ENCODE measurements at regions of chr14 and their contacts with region 1.

Region 1: DNA sequence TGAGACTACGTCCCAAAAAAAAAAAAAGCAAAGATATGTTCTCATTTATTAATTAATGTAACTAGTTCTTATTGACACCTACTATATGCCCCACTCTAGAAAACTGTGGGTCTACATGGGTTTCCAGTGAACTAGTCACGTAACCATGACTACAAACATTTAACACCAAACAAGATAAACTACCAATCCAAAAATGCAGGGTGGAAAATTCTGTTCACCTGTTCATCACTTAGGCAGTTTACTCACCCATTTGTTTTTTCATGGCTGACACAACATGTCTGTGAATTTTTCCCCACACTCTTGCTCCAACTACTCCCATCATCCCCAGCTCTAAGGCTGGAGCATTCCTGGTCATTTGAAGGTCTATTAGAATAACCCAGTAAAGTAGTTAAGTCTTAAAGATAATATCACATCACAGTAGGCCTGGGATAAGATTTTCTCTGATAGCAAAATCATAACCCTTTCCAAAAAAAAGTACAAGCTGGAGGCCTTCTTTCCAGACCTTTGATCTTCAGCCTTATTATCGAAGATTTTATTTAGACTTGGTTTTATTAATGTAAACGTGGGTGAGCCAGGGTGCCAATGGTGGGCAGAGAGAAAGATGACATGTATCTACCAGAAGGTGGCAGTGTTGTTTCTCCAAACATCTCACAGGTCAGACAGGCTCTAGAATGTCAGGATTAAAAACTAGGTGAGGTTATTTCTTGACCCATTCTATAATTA is 61.6 kb upstream of the DAAM1 start:
- DNase-seq: peak; percentile 69
- H3K27ac ChIP-seq: no peak overlapping the region
- CTCF ChIP-seq: peak; percentile 80

Region 2: GRCh38 chr14:58501214-58501816 is 625.6 kb before region 1 on chr14:
- CTCF ChIA-PET with region 1: interaction called, 13 read pairs
- POLR2A ChIA-PET with region 1: no interaction called
- DNase-seq: peak; percentile 34
- H3K27ac ChIP-seq: no peak overlapping the region
- CTCF ChIP-seq: peak; percentile 93

Region 3: GRCh38 chr14:59107819-59108428 is 18.9 kb before region 1 on chr14:
- CTCF ChIA-PET with region 1: no interaction called
- POLR2A ChIA-PET with region 1: no interaction called
- DNase-seq: no peak
- H3K27ac ChIP-seq: no peak overlapping the region
- CTCF ChIP-seq: no peak

Region 4: DNA sequence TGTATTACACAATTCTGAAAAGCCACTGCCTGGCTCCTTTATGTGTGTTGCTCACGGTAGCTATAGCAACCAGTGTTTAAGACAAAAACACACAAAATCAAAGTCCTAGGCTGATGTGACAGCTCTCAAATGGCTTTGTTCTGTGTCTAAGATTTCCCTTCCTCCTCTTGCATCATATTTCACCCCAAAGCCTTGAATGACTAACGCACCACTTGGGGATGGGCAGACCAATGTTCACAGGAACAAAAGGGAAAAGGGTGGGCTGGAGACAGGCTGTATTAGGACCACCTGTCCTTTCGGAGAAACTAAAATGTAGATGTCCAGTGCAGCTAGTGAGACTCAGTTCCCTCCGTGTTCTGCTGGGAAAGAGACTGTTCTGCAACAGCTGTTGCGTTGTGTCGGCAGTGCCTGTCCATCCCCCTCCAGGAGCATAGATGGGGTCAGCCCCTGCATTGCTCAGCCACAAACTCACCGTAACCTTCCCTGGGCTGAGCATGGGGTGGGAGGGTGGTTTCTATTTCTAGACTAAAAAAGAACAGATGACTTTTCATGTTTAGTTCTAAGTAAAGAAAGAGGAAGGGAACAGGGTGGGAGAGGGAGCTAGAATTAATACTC is 34.8 kb after region 1 on chr14:
- CTCF ChIA-PET with region 1: no interaction called
- POLR2A ChIA-PET with region 1: no interaction called
- DNase-seq: peak; percentile 19
- H3K27ac ChIP-seq: no peak overlapping the region
- CTCF ChIP-seq: no peak

Region 5: DNA sequence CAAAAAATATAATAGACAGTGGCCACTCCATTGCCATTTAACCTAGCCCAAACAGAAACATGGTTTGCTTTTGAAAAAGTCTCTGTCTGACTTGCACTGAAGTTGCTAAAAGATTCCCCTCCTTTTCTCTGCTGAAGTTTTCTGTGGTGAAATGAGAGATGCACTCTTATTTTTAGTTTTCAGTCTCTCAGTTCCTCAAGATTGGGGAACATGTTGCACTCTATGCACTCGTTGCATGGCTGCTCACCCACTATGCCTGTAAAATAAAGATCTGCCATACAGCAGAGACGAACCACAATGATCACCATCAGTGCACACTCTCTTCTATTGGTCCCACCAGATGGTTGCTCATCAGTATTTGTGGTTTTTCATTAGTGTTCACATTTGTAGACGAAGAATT is 48.5 kb after region 1 on chr14:
- CTCF ChIA-PET with region 1: no interaction called
- POLR2A ChIA-PET with region 1: no interaction called
- DNase-seq: no peak
- H3K27ac ChIP-seq: no peak overlapping the region
- CTCF ChIP-seq: no peak

Region 6: GRCh38 chr14:59438195-59438647 is 311.4 kb after region 1 on chr14:
- CTCF ChIA-PET with region 1: interaction called, 11 read pairs
- POLR2A ChIA-PET with region 1: no interaction called
- DNase-seq: peak; percentile 20
- H3K27ac ChIP-seq: no peak overlapping the region
- CTCF ChIP-seq: no peak